ENCODE measurements at regions of chr4 and their contacts with region 1.

Region 1: GRCh38 chr4:138870737-138871554 is 144.6 kb upstream of the NOCT start:
- DNase-seq: peak; percentile 70
- H3K4me3 ChIP-seq: no peak overlapping the region; a peak in 1 of 4 replicates
- H3K27ac ChIP-seq: peak overlapping the region in 1 of 2 experiments; percentile 23; a peak in 1 of 4 replicates
- H3K4me1 ChIP-seq: peaks cover 0 to 7% of the 10 kb centered on the region in 2 experiments; a peak in 2 of 4 replicates
- H3K27me3 ChIP-seq: no peaks in the 10 kb centered on the region
- CTCF ChIP-seq: peak; percentile 87
- EP300 ChIP-seq: no peak; a peak in 1 of 4 replicates
- RAD21 ChIP-seq: peak; percentile 97

Region 2: GRCh38 chr4:138035781-138036258 is 835.1 kb before region 1 on chr4:
- CTCF ChIA-PET with region 1: interaction called, 19 read pairs
- POLR2A ChIA-PET with region 1: no interaction called
- DNase-seq: peak; percentile 59
- H3K4me3 ChIP-seq: no peak overlapping the region; a peak in 1 of 4 replicates
- H3K27ac ChIP-seq: no peak overlapping the region
- H3K4me1 ChIP-seq: no peaks in the 10 kb centered on the region; a peak in 1 of 4 replicates
- H3K27me3 ChIP-seq: no peaks in the 10 kb centered on the region
- CTCF ChIP-seq: peak; percentile 83
- EP300 ChIP-seq: no peak
- RAD21 ChIP-seq: peak; percentile 90

Region 3: DNA sequence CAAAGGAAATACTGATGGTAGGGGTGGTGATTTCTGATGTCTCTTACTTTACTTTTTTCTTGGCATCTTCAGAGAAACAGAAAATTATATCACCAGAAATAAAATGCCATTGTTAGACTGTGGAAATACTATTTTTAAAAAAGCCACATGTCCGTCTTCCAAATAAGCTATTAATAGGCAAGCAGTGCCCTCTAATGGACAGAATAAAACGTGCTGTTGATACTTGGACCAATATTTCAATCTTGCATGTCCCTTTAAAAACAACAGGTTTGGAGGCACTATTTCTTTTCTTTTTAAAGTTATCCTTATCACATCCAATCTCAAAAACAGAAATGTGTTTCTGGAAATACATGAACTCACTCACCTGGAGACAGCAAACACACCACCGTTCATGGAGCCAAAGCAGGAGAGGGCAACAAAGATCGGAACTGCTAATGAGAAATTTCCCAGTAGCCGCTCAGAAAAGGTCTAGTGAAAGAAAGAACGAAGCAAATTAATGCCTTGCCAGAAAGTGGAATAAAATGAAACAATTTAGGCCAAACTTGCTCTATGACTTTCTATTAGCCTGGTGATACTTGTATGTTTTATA is 688.0 kb before region 1 on chr4:
- CTCF ChIA-PET with region 1: interaction called, 21 read pairs
- POLR2A ChIA-PET with region 1: no interaction called
- DNase-seq: peak; percentile 10
- H3K4me3 ChIP-seq: no peak overlapping the region
- H3K27ac ChIP-seq: no peak overlapping the region
- H3K4me1 ChIP-seq: peaks cover 0 to 2% of the 10 kb centered on the region in 2 experiments; a peak in 1 of 4 replicates
- H3K27me3 ChIP-seq: no peaks in the 10 kb centered on the region
- CTCF ChIP-seq: peak; percentile 85
- EP300 ChIP-seq: no peak
- RAD21 ChIP-seq: peak; percentile 90

Region 4: GRCh38 chr4:138891606-138892005 is 20.7 kb after region 1 on chr4:
- CTCF ChIA-PET with region 1: interaction called, 20 read pairs
- POLR2A ChIA-PET with region 1: no interaction called
- DNase-seq: peak; percentile 43
- H3K4me3 ChIP-seq: no peak overlapping the region
- H3K27ac ChIP-seq: peak overlapping the region; percentile 37 to 89; a peak in 3 of 4 replicates
- H3K4me1 ChIP-seq: peaks cover 16 to 19% of the 10 kb centered on the region in 2 experiments
- H3K27me3 ChIP-seq: no peaks in the 10 kb centered on the region
- CTCF ChIP-seq: no peak
- EP300 ChIP-seq: peak in 1 of 2 experiments; percentile 36; a peak in 1 of 4 replicates
- RAD21 ChIP-seq: no peak

Region 5: DNA sequence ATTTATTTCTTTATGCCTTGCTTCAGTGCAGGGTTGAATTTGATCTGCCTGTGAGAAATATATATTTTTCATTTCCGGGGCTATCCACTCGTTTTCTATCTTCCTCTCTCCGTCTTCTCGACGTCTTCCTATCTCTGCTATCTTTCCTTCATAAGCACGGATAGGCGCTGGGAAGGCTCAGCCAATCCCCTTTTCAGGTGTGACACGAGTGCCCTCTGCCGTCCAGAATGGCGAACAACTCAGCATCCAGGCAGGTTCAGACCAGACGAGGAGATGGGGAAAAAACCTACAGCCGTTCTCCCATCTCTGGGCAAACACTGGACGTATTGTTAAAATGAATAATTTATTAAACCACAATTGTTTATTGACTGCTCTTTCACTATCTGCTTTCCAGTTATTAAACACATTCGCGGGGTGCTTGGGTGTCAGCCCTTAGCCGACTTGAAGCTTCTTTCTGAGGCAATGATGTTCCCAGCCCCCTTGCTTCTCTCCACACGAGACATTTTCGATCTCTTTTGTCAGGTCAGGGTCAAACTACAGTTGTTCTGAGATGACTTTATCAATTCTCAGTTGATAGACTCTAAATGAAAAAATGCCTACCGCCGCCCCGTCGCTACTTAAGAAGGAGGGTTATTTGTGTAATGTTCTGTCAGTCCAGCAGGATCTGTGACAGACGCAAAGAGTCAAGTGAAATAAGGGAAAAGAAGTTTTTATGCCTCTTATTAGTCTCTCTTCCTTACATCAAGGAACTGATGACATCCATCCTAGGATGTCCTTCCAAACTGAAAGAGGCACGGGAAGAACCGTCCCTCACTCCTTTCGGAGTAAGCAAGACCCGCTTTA is 48.4 kb after region 1 on chr4:
- CTCF ChIA-PET with region 1: interaction called, 37 read pairs
- POLR2A ChIA-PET with region 1: interaction called, 5 read pairs
- DNase-seq: peak; percentile 54
- H3K4me3 ChIP-seq: peak overlapping the region in 1 of 2 experiments; percentile 30; a peak in 1 of 4 replicates
- H3K27ac ChIP-seq: peak overlapping the region in 1 of 2 experiments; percentile 29; a peak in 1 of 4 replicates
- H3K4me1 ChIP-seq: peaks cover 0 to 28% of the 10 kb centered on the region in 2 experiments; a peak in 2 of 4 replicates
- H3K27me3 ChIP-seq: no peaks in the 10 kb centered on the region
- CTCF ChIP-seq: peak; percentile 82
- EP300 ChIP-seq: no peak
- RAD21 ChIP-seq: peak; percentile 97

Region 6: GRCh38 chr4:139144161-139144859 is 273.4 kb after region 1 on chr4:
- CTCF ChIA-PET with region 1: no interaction called
- POLR2A ChIA-PET with region 1: no interaction called
- DNase-seq: no peak
- H3K4me3 ChIP-seq: no peak overlapping the region
- H3K27ac ChIP-seq: no peak overlapping the region
- H3K4me1 ChIP-seq: peaks cover 12 to 14% of the 10 kb centered on the region in 2 experiments; a peak in 3 of 4 replicates
- H3K27me3 ChIP-seq: no peaks in the 10 kb centered on the region
- CTCF ChIP-seq: no peak
- EP300 ChIP-seq: no peak
- RAD21 ChIP-seq: no peak